HepG2 (cell line): ENCODE measurements at regions of chr4 and their contacts with region 1.

Region 1: GRCh38 chr4:75800972-75801371 is 76.6 kb downstream of the USO1 start:
- DNase-seq: no peak
- ATAC-seq: no peak
- H3K4me3 ChIP-seq: no peak overlapping the region
- H3K27ac ChIP-seq: no peak overlapping the region
- H3K4me1 ChIP-seq: no peaks in the 10 kb centered on the region
- H3K27me3 ChIP-seq: no peaks in the 10 kb centered on the region
- CTCF ChIP-seq: no peak
- EP300 ChIP-seq: no peak
- POLR2A ChIP-seq: no peak
- RAD21 ChIP-seq: no peak

Region 2: GRCh38 chr4:74016068-74016467 is 1784.9 kb before region 1 on chr4:
- CTCF ChIA-PET with region 1: no interaction called
- POLR2A ChIA-PET with region 1: no interaction called
- in situ Hi-C with region 1: no loop called
- intact Hi-C with region 1: no loop called
- DNase-seq: no peak
- ATAC-seq: no peak
- H3K4me3 ChIP-seq: no peak overlapping the region
- H3K27ac ChIP-seq: no peak overlapping the region
- H3K4me1 ChIP-seq: no peaks in the 10 kb centered on the region
- H3K27me3 ChIP-seq: no peaks in the 10 kb centered on the region
- CTCF ChIP-seq: no peak
- EP300 ChIP-seq: no peak
- POLR2A ChIP-seq: no peak
- RAD21 ChIP-seq: no peak

Region 3: GRCh38 chr4:74715706-74716435 is 1085.1 kb before region 1 on chr4:
- CTCF ChIA-PET with region 1: no interaction called
- POLR2A ChIA-PET with region 1: no interaction called
- in situ Hi-C with region 1: no loop called
- intact Hi-C with region 1: no loop called
- DNase-seq: no peak
- ATAC-seq: no peak
- H3K4me3 ChIP-seq: no peak overlapping the region
- H3K27ac ChIP-seq: no peak overlapping the region
- H3K4me1 ChIP-seq: no peaks in the 10 kb centered on the region
- H3K27me3 ChIP-seq: no peaks in the 10 kb centered on the region
- CTCF ChIP-seq: no peak
- EP300 ChIP-seq: no peak
- POLR2A ChIP-seq: no peak
- RAD21 ChIP-seq: no peak

Region 4: DNA sequence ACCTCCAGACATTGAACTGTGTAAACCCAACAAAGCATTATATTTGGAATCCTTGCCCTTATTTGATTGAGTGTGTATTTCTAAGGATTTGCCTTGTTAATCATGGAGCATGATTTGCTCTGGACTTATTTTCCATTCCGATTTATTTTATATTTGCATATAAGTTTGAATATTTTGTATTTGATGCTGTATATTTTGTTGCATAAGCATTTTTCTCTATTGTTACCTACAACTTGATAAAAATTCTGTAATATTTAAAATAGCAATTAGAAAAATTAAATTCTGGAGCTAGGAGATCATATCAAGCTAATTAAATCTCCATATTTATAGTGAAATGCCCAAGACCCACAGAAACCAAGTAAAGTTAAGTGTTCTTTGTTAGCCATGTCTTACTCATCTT is 29.4 kb before region 1 on chr4:
- CTCF ChIA-PET with region 1: no interaction called
- POLR2A ChIA-PET with region 1: no interaction called
- in situ Hi-C with region 1: no loop called
- intact Hi-C with region 1: loop called (anchors 5 kb)
- DNase-seq: no peak
- ATAC-seq: no peak
- H3K4me3 ChIP-seq: no peak overlapping the region
- H3K27ac ChIP-seq: no peak overlapping the region
- H3K4me1 ChIP-seq: no peaks in the 10 kb centered on the region
- H3K27me3 ChIP-seq: no peaks in the 10 kb centered on the region
- CTCF ChIP-seq: no peak
- EP300 ChIP-seq: no peak
- POLR2A ChIP-seq: no peak
- RAD21 ChIP-seq: no peak